ENCODE measurements at regions of chr2 and their contacts with region 1.

Region 1: GRCh38 chr2:218395797-218396687 is 3.6 kb upstream of the CTDSP1 start:
- DNase-seq: peak; percentile 95 to 98 (median 96)
- H3K4me3 ChIP-seq: peak overlapping the region; percentile 97 to 98
- H3K4me3 Mint-ChIP-seq: peak overlapping the region; percentile 88 to 95 (median 93)
- H3K27ac ChIP-seq: peak overlapping the region; percentile 89
- H3K27ac Mint-ChIP-seq: peak overlapping the region; percentile 99 to 100 (median 99)
- H3K4me1 ChIP-seq: peaks cover 49% of the 10 kb centered on the region
- H3K4me1 Mint-ChIP-seq: peaks cover 15 to 51% (median 36%) of the 10 kb centered on the region in 4 donors
- H3K27me3 ChIP-seq: no peaks in the 10 kb centered on the region
- H3K27me3 Mint-ChIP-seq: no peaks in the 10 kb centered on the region

Region 2: DNA sequence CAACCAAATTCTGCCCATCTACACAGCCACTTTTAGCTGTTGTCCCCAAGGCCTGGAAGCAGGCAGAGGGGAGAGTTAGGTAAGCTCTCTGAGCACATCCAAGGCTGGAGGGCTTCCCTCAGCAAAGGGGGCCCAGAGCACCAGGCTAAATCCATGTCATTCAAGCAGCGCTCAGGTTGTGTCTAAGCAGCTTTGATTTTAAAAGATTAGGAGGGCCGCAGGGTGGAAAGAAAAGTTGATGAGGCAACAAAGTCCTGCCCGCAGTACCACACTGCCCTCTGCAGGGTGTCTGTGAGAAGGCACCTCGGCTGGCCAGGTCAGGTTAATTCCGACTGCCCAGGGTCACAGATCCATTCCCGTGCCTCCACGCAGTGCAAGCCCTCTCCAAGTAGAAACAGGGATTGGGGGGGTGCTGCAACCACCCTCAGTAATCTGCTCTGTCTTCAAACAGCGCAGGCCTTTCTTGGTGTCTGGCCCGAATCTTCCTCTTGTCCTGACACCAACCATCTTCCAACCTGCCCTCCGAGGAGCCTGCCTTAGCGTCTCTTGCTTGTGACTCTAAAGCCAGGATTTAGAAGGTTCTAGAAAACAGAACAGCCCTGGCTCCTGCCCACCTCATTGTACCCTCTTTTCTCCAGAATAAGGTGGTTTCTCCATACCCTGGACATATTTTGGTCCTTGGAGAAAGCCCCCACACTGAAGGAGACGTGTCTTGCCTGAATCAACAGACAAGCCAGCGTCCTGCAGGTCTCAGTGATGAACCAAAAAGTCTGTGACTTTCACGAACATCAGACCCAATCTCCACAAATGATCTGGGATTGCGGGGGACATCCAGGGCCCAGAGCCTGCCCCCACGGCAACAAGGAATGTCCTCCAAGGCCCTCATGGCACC is 682.4 kb before region 1 on chr2:
- CTCF ChIA-PET with region 1: no interaction called
- POLR2A ChIA-PET with region 1: no interaction called
- intact Hi-C with region 1: no loop called
- DNase-seq: peak; percentile 51 to 60 (median 57)
- H3K4me3 ChIP-seq: no peak overlapping the region
- H3K4me3 Mint-ChIP-seq: no peak overlapping the region
- H3K27ac ChIP-seq: no peak overlapping the region
- H3K27ac Mint-ChIP-seq: no peak overlapping the region
- H3K4me1 ChIP-seq: no peaks in the 10 kb centered on the region
- H3K4me1 Mint-ChIP-seq: peaks cover 0 to 1% (median 0%) of the 10 kb centered on the region in 4 donors
- H3K27me3 ChIP-seq: no peaks in the 10 kb centered on the region
- H3K27me3 Mint-ChIP-seq: no peaks in the 10 kb centered on the region

Region 3: GRCh38 chr2:218216674-218217359 is 179.2 kb before region 1 on chr2 and contains the start of gene ARPC2:
- CTCF ChIA-PET with region 1: interaction called, 3 read pairs
- POLR2A ChIA-PET with region 1: interaction called, 19 read pairs
- intact Hi-C with region 1: loop called (anchors 2 kb)
- DNase-seq: peak; percentile 92 to 97 (median 96)
- H3K4me3 ChIP-seq: peak within 1 kb of the TSS; percentile 85 to 97
- H3K4me3 Mint-ChIP-seq: peak within 1 kb of the TSS; percentile 89 to 98 (median 96)
- H3K27ac ChIP-seq: peak within 1 kb of the TSS; percentile 93
- H3K27ac Mint-ChIP-seq: peak within 1 kb of the TSS; percentile 93 to 99 (median 97)
- H3K4me1 ChIP-seq: peaks cover 39% of the 10 kb centered on the region
- H3K4me1 Mint-ChIP-seq: peaks cover 28 to 52% (median 38%) of the 10 kb centered on the region in 4 donors
- H3K27me3 ChIP-seq: no peaks in the 10 kb centered on the region
- H3K27me3 Mint-ChIP-seq: no peaks in the 10 kb centered on the region
- total RNA-seq, gene ARPC2: 412 to 414 TPM

Region 4: DNA sequence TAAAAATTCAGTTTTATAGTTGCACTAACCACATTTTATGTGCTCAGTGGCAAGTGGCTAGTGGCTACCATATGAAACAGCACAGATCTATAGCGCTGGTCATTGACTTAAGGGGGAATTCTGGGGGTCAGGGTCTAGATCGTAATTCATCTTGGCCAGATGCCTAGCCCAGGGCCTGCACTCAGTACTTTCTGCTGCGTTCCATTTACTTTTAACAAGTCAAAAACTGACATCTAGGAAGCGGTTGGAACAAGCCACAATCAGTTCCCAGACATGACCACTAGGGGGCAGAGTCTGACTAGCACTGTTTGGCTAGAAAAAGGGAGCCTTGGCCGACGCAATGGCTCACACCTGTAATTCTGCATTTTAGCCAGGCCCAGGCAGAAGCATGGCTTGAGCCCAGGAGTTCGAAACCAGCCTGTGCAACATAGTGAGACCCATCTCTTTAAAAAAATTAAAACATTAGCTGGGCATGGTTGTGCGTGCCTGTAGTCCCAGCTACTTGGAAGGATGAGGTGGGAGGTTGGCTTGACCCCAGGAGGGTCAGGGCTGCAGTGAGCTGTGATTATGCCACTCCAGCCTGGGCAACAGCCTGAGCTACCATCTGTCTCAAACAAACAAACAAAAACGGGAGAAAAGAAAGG is 94.7 kb before region 1 on chr2:
- CTCF ChIA-PET with region 1: interaction called, 36 read pairs
- POLR2A ChIA-PET with region 1: interaction called, 12 read pairs
- intact Hi-C with region 1: loop called (anchors 1 kb)
- DNase-seq: peak; percentile 83 to 87 (median 84)
- H3K4me3 ChIP-seq: no peak overlapping the region
- H3K4me3 Mint-ChIP-seq: no peak overlapping the region
- H3K27ac ChIP-seq: no peak overlapping the region
- H3K27ac Mint-ChIP-seq: peak overlapping the region; percentile 7 to 91 (median 39)
- H3K4me1 ChIP-seq: peaks cover 8% of the 10 kb centered on the region
- H3K4me1 Mint-ChIP-seq: peaks cover 3 to 8% (median 5%) of the 10 kb centered on the region in 4 donors
- H3K27me3 ChIP-seq: no peaks in the 10 kb centered on the region
- H3K27me3 Mint-ChIP-seq: no peaks in the 10 kb centered on the region

Region 5: DNA sequence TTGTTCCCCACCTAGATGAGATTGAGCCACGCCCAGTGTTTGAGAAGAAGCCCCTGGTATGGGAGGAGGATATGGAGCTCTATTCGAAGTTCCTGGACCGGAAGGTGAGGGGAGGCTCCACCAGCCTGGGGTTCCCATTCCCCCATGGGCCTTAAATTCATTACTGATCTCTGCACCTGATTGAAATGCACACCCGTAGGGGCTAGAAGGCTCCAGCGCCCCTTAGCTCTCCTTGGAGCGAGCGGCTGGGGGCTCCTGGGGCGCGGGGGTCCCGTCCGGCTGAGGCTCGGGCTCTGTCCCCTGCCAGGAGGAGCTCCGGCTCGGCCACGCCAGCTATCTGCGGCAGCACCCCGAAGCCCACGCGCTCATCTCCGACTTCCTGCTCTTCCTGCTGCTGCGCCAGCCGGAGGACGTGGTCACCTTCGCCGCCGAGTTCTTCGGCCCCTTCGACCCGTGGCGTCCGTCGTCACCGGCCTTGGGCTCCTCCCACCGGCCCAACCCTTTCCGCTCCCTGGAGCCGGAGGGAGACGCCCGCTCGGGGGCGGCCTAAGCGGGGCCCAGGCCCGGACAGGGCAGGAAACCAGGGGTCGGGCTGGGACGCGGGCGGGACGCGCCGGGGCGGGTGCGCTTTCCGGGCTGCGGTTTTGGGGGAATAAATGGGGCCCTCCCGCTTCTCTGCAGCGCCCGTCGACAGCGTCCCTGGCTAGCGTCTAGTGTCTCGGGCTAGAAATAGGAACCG is 28.5 kb before region 1 on chr2:
- CTCF ChIA-PET with region 1: interaction called, 5 read pairs
- POLR2A ChIA-PET with region 1: interaction called, 19 read pairs
- intact Hi-C with region 1: no loop called
- DNase-seq: peak; percentile 64 to 74 (median 71)
- H3K4me3 ChIP-seq: peak overlapping the region; percentile 42 to 60
- H3K4me3 Mint-ChIP-seq: peak overlapping the region; percentile 74 to 89 (median 82)
- H3K27ac ChIP-seq: peak overlapping the region; percentile 42
- H3K27ac Mint-ChIP-seq: peak overlapping the region; percentile 84 to 96 (median 90)
- H3K4me1 ChIP-seq: peaks cover 28% of the 10 kb centered on the region
- H3K4me1 Mint-ChIP-seq: peaks cover 13 to 33% (median 25%) of the 10 kb centered on the region in 4 donors
- H3K27me3 ChIP-seq: no peaks in the 10 kb centered on the region
- H3K27me3 Mint-ChIP-seq: no peaks in the 10 kb centered on the region

Region 6: DNA sequence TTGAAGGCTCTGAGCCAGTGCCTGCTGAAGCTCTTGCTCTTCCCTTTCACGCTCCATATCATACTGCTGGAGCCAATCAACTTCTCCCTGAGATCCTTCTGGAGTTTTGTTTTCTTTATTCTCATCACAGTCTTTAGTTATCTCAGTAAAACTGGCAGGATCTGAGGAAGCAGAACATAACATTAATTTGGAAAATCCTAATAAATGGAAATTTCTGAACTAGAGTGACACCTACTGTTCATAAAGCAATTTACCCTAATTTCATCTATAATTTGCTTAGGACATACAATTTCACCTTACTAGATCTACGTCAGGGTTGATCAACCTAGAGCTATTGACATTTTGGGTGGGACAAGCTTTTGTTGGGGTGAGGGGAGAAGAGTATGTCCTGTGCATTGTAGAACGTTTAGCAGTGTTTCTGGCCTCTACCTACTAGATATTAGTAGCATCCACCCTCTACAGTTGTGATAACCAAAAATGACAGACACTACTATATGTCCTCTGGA is 70.0 kb after region 1 on chr2:
- CTCF ChIA-PET with region 1: interaction called, 4 read pairs
- POLR2A ChIA-PET with region 1: interaction called, 13 read pairs
- intact Hi-C with region 1: loop called (anchors 1 kb)
- DNase-seq: peak in 4 of 5 donors; percentile 11 to 15 (median 14)
- H3K4me3 ChIP-seq: no peak overlapping the region
- H3K4me3 Mint-ChIP-seq: no peak overlapping the region
- H3K27ac ChIP-seq: no peak overlapping the region
- H3K27ac Mint-ChIP-seq: peak overlapping the region in 6 of 7 donors; percentile 20 to 78 (median 47)
- H3K4me1 ChIP-seq: peaks cover 7% of the 10 kb centered on the region
- H3K4me1 Mint-ChIP-seq: peaks cover 6 to 12% (median 8%) of the 10 kb centered on the region in 4 donors
- H3K27me3 ChIP-seq: no peaks in the 10 kb centered on the region
- H3K27me3 Mint-ChIP-seq: no peaks in the 10 kb centered on the region

Region 7: DNA sequence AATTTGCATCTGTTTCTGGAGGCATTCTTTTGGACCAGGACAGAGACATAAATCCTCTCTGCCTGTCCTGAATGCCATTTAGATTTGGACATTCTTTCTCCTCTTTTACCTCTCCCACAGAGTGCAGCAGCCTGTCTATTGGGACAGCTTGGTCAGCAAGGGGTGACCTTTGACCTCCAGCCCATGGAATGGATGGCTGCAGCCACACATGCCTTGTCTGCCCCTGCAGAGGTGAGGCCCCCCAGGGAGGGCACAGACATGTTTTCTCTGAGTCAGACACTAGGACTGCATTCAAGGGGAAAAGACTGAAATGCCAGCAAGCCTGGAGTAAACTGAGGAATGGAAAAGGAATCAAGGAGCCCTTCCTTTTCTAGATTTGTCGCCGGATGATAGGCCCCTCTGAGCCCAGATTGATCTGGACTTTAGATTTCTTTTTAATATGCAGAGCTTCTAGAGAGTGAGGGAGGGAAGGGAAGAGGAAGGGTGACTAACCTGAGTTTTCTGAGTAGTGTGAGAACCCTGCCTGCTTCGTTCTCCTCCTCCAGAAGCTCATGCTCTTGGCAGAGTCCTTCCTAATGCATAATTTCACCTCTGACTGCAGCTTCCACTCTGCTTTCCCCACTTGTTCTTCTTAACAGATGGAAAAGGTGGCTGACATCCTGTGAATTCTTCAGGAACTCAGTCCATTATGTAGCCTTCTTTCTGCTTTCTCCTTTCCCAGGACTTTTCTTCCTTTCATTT is 298.5 kb after region 1 on chr2:
- CTCF ChIA-PET with region 1: no interaction called
- POLR2A ChIA-PET with region 1: no interaction called
- intact Hi-C with region 1: no loop called
- DNase-seq: no peak
- H3K4me3 ChIP-seq: no peak overlapping the region
- H3K4me3 Mint-ChIP-seq: no peak overlapping the region
- H3K27ac ChIP-seq: no peak overlapping the region
- H3K27ac Mint-ChIP-seq: peak overlapping the region in 1 of 7 donors; percentile 38
- H3K4me1 ChIP-seq: no peaks in the 10 kb centered on the region
- H3K4me1 Mint-ChIP-seq: no peaks in the 10 kb centered on the region
- H3K27me3 ChIP-seq: no peaks in the 10 kb centered on the region
- H3K27me3 Mint-ChIP-seq: no peaks in the 10 kb centered on the region

Region 8: GRCh38 chr2:218710687-218711549 is 314.9 kb after region 1 on chr2 and contains the start of gene TTLL4:
- CTCF ChIA-PET with region 1: no interaction called
- POLR2A ChIA-PET with region 1: no interaction called
- intact Hi-C with region 1: loop called (anchors 2 kb)
- DNase-seq: peak; percentile 98 to 99 (median 99)
- H3K4me3 ChIP-seq: peak within 1 kb of the TSS; percentile 55 to 78
- H3K4me3 Mint-ChIP-seq: peak within 1 kb of the TSS; percentile 88 to 98 (median 95)
- H3K27ac ChIP-seq: peak within 1 kb of the TSS; percentile 81
- H3K27ac Mint-ChIP-seq: peak within 1 kb of the TSS; percentile 79 to 96 (median 93)
- H3K4me1 ChIP-seq: peaks cover 16% of the 10 kb centered on the region
- H3K4me1 Mint-ChIP-seq: peaks cover 14 to 26% (median 18%) of the 10 kb centered on the region in 4 donors
- H3K27me3 ChIP-seq: no peaks in the 10 kb centered on the region
- H3K27me3 Mint-ChIP-seq: peaks cover 0 to under 1% of the 10 kb centered on the region in 2 donors
- total RNA-seq, gene TTLL4: 23.1 to 26.1 TPM

Region 9: DNA sequence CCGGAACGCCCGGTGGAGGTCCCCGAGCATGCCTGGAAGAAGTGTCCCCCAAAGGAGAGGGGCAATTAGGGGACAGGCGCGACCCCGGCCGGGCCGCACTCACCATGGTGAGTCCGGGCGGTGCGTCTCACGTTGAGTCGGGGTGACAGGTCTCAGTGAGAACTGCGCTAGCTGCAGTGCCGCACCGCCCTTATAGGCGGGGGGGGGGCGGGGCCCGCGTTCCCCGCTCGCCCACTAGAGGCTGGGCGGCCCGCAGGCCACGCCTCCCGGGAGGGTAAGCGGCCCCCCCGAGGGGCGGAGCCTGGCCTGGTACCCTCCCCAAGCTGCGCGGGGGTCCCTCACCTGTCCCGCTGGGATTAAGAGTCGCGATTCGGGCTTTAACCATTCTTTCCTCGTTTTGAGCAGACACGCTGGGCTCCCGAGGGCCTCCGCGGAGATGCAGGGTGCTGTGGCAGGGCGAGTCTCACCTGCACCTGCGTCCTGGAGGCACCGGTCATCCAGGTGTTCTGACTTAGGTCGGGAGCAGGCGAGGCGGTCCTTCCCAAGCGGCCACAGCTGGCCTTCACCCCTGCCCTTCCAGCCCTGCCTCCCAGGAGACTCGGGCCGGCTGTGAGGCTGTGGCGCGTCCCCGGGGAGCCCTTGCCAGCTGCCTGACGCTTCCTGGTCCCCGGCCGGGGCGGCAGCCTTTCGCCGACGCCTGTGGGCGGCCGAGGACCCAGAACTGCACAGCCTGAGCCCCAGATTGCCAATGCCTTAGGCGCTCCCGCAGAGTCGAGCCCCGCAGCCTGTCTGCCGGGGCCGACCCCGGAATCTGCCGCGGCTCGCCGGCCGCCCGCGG is 857.9 kb after region 1 on chr2 and contains the start of gene TUBA4A:
- CTCF ChIA-PET with region 1: no interaction called
- POLR2A ChIA-PET with region 1: interaction called, 5 read pairs
- intact Hi-C with region 1: loop called (anchors 5 kb)
- DNase-seq: peak; percentile 89 to 90 (median 90)
- H3K4me3 ChIP-seq: peak within 1 kb of the TSS; percentile 94 to 100
- H3K4me3 Mint-ChIP-seq: peak within 1 kb of the TSS; percentile 85 to 99 (median 94)
- H3K27ac ChIP-seq: peak within 1 kb of the TSS; percentile 87
- H3K27ac Mint-ChIP-seq: peak within 1 kb of the TSS; percentile 92 to 98 (median 97)
- H3K4me1 ChIP-seq: peaks cover 42% of the 10 kb centered on the region
- H3K4me1 Mint-ChIP-seq: peaks cover 34 to 60% (median 45%) of the 10 kb centered on the region in 4 donors
- H3K27me3 ChIP-seq: no peaks in the 10 kb centered on the region
- H3K27me3 Mint-ChIP-seq: no peaks in the 10 kb centered on the region
- total RNA-seq, gene TUBA4A: 242 to 259 TPM